Common myeloid progenitor, CD34-positive (primary cell): ENCODE measurements at regions of chr3 and their contacts with region 1.

Region 1: DNA sequence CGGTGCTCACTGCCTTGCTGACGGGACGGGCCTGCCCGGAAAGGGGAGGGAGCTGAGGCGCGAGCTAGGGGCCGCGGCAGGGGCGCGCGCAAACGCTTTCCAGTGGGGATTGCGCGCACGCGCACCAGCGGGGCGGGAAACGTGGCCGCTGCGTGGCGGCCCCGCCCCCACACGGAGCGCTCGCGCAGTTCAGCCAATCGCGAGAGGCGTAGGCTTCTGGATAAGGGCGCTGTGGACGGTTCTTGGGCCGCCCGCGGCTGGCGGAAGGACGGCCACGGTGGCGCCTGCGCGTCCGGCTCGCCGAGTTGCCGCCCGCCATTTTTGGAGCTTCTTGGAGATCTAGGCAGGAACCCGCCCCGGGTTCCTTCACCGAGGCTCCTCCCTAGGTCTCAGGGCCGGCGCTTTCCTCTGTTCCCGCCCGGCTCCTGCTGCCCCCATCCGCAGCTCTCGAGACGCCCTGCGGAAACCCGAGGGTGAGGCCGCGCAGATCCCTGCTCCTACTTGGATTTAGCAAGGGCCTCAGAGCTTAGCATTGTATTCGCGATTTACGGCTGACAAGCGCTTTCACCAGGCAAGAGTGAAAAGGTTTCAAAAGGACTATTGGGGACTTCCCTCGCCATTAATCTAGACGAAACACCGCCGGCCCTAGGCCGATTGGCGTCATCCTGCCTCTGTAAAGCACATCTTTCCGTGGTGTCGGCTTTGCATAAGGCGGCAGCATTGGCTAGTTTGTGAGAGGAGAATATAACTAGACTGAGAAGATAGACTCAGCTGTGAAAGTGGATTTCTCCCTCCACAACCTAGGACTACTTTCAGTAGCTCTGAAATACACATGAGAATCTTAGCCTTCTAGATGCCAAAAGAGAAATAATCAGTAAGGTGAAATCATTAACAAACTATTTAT is 496 bp upstream of the STAG1 start:
- DNase-seq: peak; percentile 98 to 99 (median 99)
- H3K4me3 ChIP-seq: peak overlapping the region; percentile 58 to 90 (median 83)
- H3K27ac ChIP-seq: peak overlapping the region; percentile 95 to 97
- H3K4me1 ChIP-seq: peaks cover 17 to 38% (median 27%) of the 10 kb centered on the region in 4 experiments
- H3K27me3 ChIP-seq: no peaks in the 10 kb centered on the region

Region 2: DNA sequence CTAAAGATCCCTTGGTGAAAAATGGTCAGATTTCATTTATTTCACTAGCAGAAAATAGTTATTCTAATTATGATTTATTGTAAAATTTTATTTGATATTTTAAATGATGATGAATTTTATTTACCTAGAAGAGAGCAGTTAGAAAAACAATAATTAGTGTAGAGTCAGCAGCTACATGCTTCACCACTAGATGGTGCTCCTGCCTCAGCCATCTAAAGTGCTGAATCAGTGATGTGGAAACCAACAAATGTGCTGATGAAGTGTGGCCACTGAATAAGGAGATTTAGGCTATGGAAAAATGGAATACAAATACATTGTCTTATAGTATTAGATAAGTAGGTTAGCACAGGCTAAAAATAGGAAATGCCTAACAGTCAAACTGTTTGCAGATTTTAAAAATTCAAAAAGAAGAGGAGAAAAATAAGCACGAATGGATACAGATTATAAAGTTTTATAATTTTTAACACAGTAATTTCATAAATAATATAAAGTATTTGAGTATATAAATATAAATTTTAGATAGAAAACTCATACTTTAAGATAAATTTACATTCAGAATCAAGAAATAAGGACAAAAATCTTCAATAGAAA is 677.4 kb before region 1 on chr3:
- CTCF ChIA-PET with region 1: interaction called, 22 read pairs
- POLR2A ChIA-PET with region 1: interaction called, 3 read pairs
- DNase-seq: peak; percentile 81 to 90 (median 81)
- H3K4me3 ChIP-seq: no peak overlapping the region
- H3K27ac ChIP-seq: no peak overlapping the region
- H3K4me1 ChIP-seq: peaks cover 3 to 10% (median 6%) of the 10 kb centered on the region in 4 experiments
- H3K27me3 ChIP-seq: no peaks in the 10 kb centered on the region

Region 3: GRCh38 chr3:136390574-136390973 is 362.1 kb before region 1 on chr3:
- CTCF ChIA-PET with region 1: interaction called, 10 read pairs
- POLR2A ChIA-PET with region 1: interaction called, 3 read pairs
- DNase-seq: no peak
- H3K4me3 ChIP-seq: no peak overlapping the region
- H3K27ac ChIP-seq: no peak overlapping the region
- H3K4me1 ChIP-seq: no peaks in the 10 kb centered on the region
- H3K27me3 ChIP-seq: no peaks in the 10 kb centered on the region

Region 4: GRCh38 chr3:136734382-136735070 is 18.1 kb before region 1 on chr3:
- CTCF ChIA-PET with region 1: interaction called, 22 read pairs
- POLR2A ChIA-PET with region 1: no interaction called
- DNase-seq: peak; percentile 50 to 58 (median 56)
- H3K4me3 ChIP-seq: no peak overlapping the region
- H3K27ac ChIP-seq: no peak overlapping the region
- H3K4me1 ChIP-seq: peaks cover 3 to 17% (median 7%) of the 10 kb centered on the region in 4 experiments
- H3K27me3 ChIP-seq: no peaks in the 10 kb centered on the region

Region 5: GRCh38 chr3:136741063-136741462 is 11.6 kb before region 1 on chr3:
- CTCF ChIA-PET with region 1: interaction called, 22 read pairs
- POLR2A ChIA-PET with region 1: no interaction called
- DNase-seq: no peak
- H3K4me3 ChIP-seq: no peak overlapping the region
- H3K27ac ChIP-seq: no peak overlapping the region
- H3K4me1 ChIP-seq: peaks cover 5 to 13% (median 11%) of the 10 kb centered on the region in 4 experiments
- H3K27me3 ChIP-seq: no peaks in the 10 kb centered on the region

Region 6: DNA sequence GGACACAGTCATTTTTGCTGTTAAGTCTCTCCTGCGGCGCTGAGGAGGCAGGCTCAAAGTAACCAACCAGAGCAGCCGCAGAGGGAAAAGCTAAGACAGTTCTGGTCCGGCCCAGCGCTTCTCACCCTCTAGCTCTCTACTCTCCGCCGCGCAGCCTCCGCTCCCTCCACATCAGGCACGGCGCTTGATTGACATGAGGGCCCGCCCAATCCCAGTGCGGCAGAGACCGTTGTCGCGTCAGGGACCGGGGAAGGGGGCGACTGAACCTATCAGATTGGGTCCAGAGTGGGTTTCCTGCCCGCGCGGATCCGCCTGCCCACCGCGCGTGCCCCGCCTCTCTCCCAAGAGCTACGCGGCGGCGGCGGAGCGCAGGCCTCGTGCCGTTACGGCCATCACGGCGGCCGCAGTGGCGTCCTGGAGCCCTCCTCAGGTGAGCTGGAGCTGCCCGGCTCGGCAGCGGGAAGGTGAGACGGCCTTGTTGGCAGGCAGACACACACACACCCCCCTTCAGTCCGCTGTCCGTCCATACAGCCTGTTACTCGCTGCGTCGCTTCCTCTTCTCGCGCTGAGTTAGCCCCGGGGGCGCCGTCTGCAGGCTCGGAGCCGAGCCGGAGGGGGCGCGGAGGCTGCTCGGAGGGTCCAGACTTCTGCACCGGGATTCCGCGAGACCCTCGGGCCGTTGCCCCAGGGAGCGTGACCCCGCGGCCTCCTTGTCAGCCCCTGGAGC is 109.4 kb after region 1 on chr3 and contains the start of gene NCK1:
- CTCF ChIA-PET with region 1: interaction called, 11 read pairs
- POLR2A ChIA-PET with region 1: interaction called, 4 read pairs
- DNase-seq: peak; percentile 98 to 99 (median 99)
- H3K4me3 ChIP-seq: peak within 1 kb of the TSS; percentile 76 to 96 (median 91)
- H3K27ac ChIP-seq: peak within 1 kb of the TSS; percentile 73 to 92
- H3K4me1 ChIP-seq: peaks cover 10 to 45% (median 31%) of the 10 kb centered on the region in 4 experiments
- H3K27me3 ChIP-seq: no peaks in the 10 kb centered on the region

Region 7: GRCh38 chr3:137013955-137014688 is 261.4 kb after region 1 on chr3:
- CTCF ChIA-PET with region 1: interaction called, 23 read pairs
- POLR2A ChIA-PET with region 1: no interaction called
- DNase-seq: peak; percentile 80 to 86 (median 81)
- H3K4me3 ChIP-seq: peak overlapping the region; percentile 55 to 83 (median 74)
- H3K27ac ChIP-seq: peak overlapping the region in 1 of 2 experiments; percentile 70
- H3K4me1 ChIP-seq: peaks cover 0 to 10% (median 5%) of the 10 kb centered on the region in 4 experiments
- H3K27me3 ChIP-seq: no peaks in the 10 kb centered on the region